ENCODE measurements at regions of chr11 and their contacts with region 1.

Region 1: GRCh38 chr11:86559311-86559945 is 113.0 kb downstream of the ME3 start:
- DNase-seq: peak; percentile 49 to 78 (median 65)
- ATAC-seq: peak; percentile 78 to 92
- H3K4me3 ChIP-seq: no peak overlapping the region
- H3K27ac ChIP-seq: peak overlapping the region; percentile 91
- H3K4me1 ChIP-seq: peaks cover 11% of the 10 kb centered on the region
- H3K27me3 ChIP-seq: no peaks in the 10 kb centered on the region

Region 2: DNA sequence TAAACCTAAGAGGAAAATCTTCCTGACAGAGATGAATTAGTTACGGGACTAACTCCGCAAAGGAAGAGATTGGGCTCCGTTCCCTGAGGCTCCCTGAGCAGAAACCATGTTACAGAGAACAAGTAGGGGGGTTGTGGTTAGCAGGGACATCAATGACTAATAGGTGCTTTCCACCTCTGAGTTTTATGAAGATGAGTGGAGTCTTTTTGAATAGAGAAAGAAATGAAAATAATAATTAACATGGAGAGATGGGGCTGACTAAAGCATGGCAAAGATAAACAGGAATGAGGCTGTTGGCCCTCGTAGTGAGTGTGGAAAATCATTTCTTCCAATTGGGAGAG is 443.1 kb before region 1 on chr11:
- intact Hi-C with region 1: no loop called
- DNase-seq: no peak
- ATAC-seq: no peak
- H3K4me3 ChIP-seq: no peak overlapping the region
- H3K27ac ChIP-seq: no peak overlapping the region
- H3K4me1 ChIP-seq: no peaks in the 10 kb centered on the region
- H3K27me3 ChIP-seq: no peaks in the 10 kb centered on the region

Region 3: DNA sequence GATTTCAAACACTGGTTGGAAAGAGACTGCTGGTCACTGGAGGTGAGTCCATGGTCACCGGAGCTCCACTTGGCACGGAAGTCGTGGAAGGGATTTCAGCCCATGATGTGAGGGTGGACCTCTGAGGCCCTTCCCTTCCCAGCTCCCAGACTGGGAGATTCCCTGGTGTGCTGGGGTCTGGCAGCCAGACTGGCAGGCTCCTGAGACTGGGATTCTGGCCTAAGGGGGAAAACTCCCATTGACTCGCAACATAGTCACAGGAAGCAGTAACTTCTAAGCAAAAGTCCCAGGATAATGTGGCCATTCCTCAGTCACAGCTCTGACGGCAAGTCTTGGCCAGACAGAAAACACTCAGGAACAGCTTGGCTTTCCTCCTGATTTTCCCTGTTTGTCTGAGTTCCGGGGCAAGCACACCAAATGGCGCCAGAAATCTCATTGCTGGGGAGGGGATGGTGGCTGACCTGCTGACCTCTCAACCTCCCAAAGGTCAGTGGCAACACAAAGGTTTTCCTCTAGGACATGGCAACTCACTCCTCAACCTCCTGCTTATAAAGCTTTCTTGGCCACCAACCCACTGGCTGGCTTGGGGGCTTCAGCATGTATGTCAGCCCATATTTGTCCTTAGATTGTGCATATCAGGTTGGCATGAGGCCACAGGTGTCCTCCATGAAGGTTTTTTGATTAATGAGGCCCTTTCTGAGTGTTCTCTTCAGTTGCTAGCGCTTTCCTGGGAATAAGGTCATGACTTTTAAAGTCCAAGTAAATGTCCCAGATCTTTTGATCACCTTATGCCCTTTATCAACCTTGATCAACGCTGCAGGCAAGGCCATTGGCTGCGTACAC is 85.2 kb before region 1 on chr11:
- intact Hi-C with region 1: loop called in 1 of 4 experiments (anchors 5 kb)
- DNase-seq: peak; percentile 78 to 85 (median 83)
- ATAC-seq: peak; percentile 56 to 88
- H3K4me3 ChIP-seq: no peak overlapping the region
- H3K27ac ChIP-seq: peak overlapping the region; percentile 95
- H3K4me1 ChIP-seq: peaks cover 38% of the 10 kb centered on the region
- H3K27me3 ChIP-seq: no peaks in the 10 kb centered on the region

Measured in right cardiac atrium (tissue), 5 donors.